ENCODE measurements at regions of chr1 and their contacts with region 1.

Region 1: DNA sequence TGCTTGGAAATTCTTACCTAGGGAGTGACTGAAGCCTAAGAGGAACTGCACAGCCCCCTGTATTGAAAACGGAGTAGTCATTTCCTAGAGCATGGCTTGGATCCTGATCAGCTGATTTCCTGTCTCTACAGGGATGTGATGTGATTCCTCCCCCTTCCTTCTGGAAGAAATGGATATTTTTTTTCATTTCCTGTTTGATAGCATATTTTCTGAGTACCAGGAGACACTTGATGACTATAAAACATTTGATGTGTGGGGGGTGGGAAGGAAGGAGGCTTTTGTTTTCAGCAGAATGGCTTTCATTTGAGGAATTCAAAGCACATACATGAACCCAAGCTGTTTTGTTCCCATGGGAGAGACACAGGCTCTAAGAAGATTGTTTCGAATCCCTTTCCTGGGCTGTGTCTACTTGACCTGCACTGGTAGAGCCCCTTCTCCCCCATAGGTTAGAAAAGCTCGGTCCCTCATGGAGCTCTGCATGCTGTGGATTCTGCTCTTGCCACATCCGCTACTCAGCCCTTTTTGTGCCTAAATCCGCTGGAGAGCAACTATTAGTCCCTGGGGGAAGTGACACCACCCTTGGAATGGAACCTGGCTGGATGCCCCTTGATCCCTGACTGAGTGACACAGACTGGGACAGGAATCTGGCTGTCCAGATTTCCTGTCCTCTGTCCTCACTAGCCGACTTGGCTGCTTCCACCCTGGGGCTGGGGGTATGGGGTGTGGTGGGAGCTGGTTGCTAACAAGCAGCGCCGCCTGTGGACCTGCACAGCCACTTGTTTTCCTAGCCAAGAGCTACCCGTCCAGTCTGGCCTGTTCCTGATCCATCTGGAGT is 71.8 kb upstream of the MACF1 start:
- DNase-seq: peak; percentile 85
- H3K4me3 Mint-ChIP-seq: peak overlapping the region; percentile 30
- H3K27ac Mint-ChIP-seq: peak overlapping the region; percentile 79
- H3K4me1 Mint-ChIP-seq: peaks cover 50% of the 10 kb centered on the region
- H3K27me3 Mint-ChIP-seq: no peaks in the 10 kb centered on the region
- CTCF ChIP-seq: peak; percentile 38

Region 2: GRCh38 chr1:38789498-38790169 is 343.1 kb before region 1 on chr1:
- CTCF ChIA-PET with region 1: no interaction called
- intact Hi-C with region 1: no loop called
- DNase-seq: peak; percentile 27
- H3K4me3 Mint-ChIP-seq: no peak overlapping the region
- H3K27ac Mint-ChIP-seq: no peak overlapping the region
- H3K4me1 Mint-ChIP-seq: no peaks in the 10 kb centered on the region
- H3K27me3 Mint-ChIP-seq: peaks cover 79% of the 10 kb centered on the region
- CTCF ChIP-seq: no peak

Region 3: GRCh38 chr1:39105061-39105840 is 27.5 kb before region 1 on chr1:
- CTCF ChIA-PET with region 1: interaction called, 12 read pairs
- intact Hi-C with region 1: loop called (anchors 2 kb)
- DNase-seq: peak; percentile 81
- H3K4me3 Mint-ChIP-seq: no peak overlapping the region
- H3K27ac Mint-ChIP-seq: no peak overlapping the region
- H3K4me1 Mint-ChIP-seq: peaks cover 33% of the 10 kb centered on the region
- H3K27me3 Mint-ChIP-seq: no peaks in the 10 kb centered on the region
- CTCF ChIP-seq: no peak

Region 4: DNA sequence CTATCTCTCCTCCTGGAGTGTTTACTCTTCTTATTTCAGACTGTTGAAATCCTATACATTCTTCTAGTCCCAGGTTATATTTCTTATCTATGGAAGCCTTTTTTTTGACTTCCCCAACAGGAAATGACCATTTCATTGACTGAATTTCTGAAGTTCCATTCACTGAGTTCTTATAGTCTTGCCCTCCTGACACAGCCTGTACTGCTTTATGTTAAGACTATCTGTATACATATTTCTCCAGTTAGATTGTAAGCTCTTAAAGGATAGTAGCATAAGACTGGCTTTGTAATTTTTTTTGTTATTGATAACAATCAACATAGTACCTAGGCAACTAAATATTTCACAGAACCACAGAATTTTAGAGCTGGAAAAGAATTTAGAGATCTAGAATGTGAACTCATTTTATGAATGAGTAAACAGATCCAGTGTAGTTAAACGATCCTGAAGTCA is 56.9 kb after region 1 on chr1:
- CTCF ChIA-PET with region 1: interaction called, 30 read pairs
- intact Hi-C with region 1: loop called (anchors 2 kb)
- DNase-seq: no peak
- H3K4me3 Mint-ChIP-seq: peak overlapping the region; percentile 35
- H3K27ac Mint-ChIP-seq: peak overlapping the region; percentile 86
- H3K4me1 Mint-ChIP-seq: peaks cover 86% of the 10 kb centered on the region
- H3K27me3 Mint-ChIP-seq: no peaks in the 10 kb centered on the region
- CTCF ChIP-seq: no peak

Region 5: DNA sequence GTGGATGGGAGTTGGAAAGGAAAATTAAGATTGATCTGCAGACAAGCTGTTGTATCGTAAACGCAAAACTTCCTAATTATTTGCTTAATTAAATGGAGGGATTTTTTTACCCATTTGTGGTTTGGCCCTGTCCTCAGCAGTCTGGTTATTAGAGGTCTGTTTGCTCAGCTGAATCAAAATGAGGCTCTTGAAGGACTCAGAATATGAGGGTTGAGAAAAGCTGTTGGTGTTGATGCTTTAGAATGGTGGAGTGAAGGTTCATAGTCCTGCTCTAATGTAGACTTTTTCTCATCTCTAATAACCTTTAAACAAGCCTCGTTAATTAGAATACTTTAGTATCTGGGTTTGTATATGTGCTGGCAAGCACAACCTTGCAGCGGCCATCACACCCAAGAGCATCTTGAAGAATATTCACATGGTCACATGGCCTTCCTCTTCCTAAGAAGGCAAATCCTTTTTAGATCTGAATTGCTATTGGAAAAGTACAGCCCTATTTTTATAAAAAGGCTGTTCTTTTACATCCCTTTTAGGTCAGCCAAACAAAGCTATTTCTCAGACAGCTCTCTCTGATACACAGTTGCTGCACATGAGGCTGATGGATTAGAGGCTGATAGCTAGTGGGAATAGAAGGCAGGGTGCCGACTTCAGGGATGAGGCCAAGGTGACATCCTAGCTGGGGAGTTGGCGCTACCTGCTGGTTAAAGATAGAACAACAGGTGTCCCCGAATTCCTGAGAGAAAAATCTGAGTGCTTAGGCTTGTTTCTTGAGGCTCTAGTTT is 125.6 kb after region 1 on chr1:
- CTCF ChIA-PET with region 1: interaction called, 7 read pairs
- intact Hi-C with region 1: loop called (anchors 1 kb)
- DNase-seq: peak; percentile 76
- H3K4me3 Mint-ChIP-seq: no peak overlapping the region
- H3K27ac Mint-ChIP-seq: no peak overlapping the region
- H3K4me1 Mint-ChIP-seq: no peaks in the 10 kb centered on the region
- H3K27me3 Mint-ChIP-seq: no peaks in the 10 kb centered on the region
- CTCF ChIP-seq: peak; percentile 81